Caco-2 (cell line): ENCODE measurements at regions of chr12 and their contacts with region 1.

Region 1: GRCh38 chr12:46268590-46269558 is at the start of gene SLC38A1:
- DNase-seq: peak; percentile 94 to 95
- H3K4me3 ChIP-seq: peak within 1 kb of the TSS; percentile 78
- H3K4me3 Mint-ChIP-seq: no peak within 1 kb of the TSS
- H3K27ac Mint-ChIP-seq: no peak within 1 kb of the TSS
- H3K4me1 ChIP-seq: peaks cover 33% of the 10 kb centered on the region
- H3K4me1 Mint-ChIP-seq: no peaks in the 10 kb centered on the region
- H3K27me3 ChIP-seq: no peaks in the 10 kb centered on the region
- H3K27me3 Mint-ChIP-seq: no peaks in the 10 kb centered on the region
- CTCF ChIP-seq: no peak
- total RNA-seq, gene SLC38A1: 245 and 259 TPM in 2 replicates

Region 2: GRCh38 chr12:46124848-46125619 is 143.8 kb before region 1 on chr12:
- CTCF ChIA-PET with region 1: interaction called, 4 read pairs
- POLR2A ChIA-PET with region 1: interaction called, 3 read pairs
- intact Hi-C with region 1: loop called (anchors 5 kb)
- DNase-seq: peak in 1 of 2 experiments; percentile 64
- H3K4me3 ChIP-seq: no peak overlapping the region
- H3K4me3 Mint-ChIP-seq: peak overlapping the region; percentile 35
- H3K27ac Mint-ChIP-seq: no peak overlapping the region
- H3K4me1 ChIP-seq: peaks cover 6% of the 10 kb centered on the region
- H3K4me1 Mint-ChIP-seq: peaks cover 19% of the 10 kb centered on the region
- H3K27me3 ChIP-seq: no peaks in the 10 kb centered on the region
- H3K27me3 Mint-ChIP-seq: peaks cover 18% of the 10 kb centered on the region
- CTCF ChIP-seq: peak; percentile 43 to 84